Panc1 (cell line): ENCODE measurements at regions of chr14 and their contacts with region 1.

Region 1: GRCh38 chr14:51780006-51780692 is 80.3 kb upstream of the GNG2 start:
- DNase-seq: peak; percentile 15
- ATAC-seq: peak; percentile 82
- H3K4me3 ChIP-seq: no peak overlapping the region
- H3K27ac ChIP-seq: no peak overlapping the region
- H3K4me1 ChIP-seq: no peaks in the 10 kb centered on the region
- H3K27me3 ChIP-seq: peaks cover 10% of the 10 kb centered on the region
- CTCF ChIP-seq: peak; percentile 80

Region 2: DNA sequence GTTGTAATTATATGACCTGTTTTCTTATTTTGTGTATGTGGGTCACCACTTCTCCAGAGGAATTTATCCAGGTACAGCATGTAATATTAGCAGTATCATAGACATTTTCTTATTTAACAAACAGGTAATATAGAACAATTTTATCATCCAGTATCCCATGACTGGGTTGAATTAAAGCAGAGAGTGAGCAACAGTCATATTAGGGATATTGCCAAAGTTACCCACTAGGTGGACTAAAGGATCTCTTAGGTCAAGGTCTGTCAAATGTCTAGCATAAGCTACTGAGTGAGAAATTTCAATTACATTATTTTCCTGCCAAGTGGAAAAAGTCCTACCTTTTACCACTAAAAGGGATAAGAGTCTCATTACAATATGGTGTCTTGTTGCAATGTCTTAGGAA is 623.1 kb before region 1 on chr14:
- CTCF ChIA-PET with region 1: no interaction called
- POLR2A ChIA-PET with region 1: no interaction called
- in situ Hi-C with region 1: no loop called
- intact Hi-C with region 1: loop called (anchors 10 kb)
- DNase-seq: peak; percentile 1
- ATAC-seq: peak; percentile 76
- H3K4me3 ChIP-seq: no peak overlapping the region
- H3K27ac ChIP-seq: no peak overlapping the region
- H3K4me1 ChIP-seq: no peaks in the 10 kb centered on the region
- H3K27me3 ChIP-seq: no peaks in the 10 kb centered on the region
- CTCF ChIP-seq: peak; percentile 37; the same call in 1 of the 2 replicates

Region 3: GRCh38 chr14:51283402-51284085 is 496.6 kb before region 1 on chr14:
- CTCF ChIA-PET with region 1: interaction called, 3 read pairs
- POLR2A ChIA-PET with region 1: no interaction called
- in situ Hi-C with region 1: no loop called
- intact Hi-C with region 1: loop called (anchors 1 kb)
- DNase-seq: peak; percentile 74
- ATAC-seq: peak; percentile 80
- H3K4me3 ChIP-seq: no peak overlapping the region
- H3K27ac ChIP-seq: peak overlapping the region; percentile 9; the same call in 1 of the 2 replicates
- H3K4me1 ChIP-seq: no peaks in the 10 kb centered on the region
- H3K27me3 ChIP-seq: no peaks in the 10 kb centered on the region
- CTCF ChIP-seq: peak; percentile 67; the same call in 1 of the 2 replicates

Region 4: DNA sequence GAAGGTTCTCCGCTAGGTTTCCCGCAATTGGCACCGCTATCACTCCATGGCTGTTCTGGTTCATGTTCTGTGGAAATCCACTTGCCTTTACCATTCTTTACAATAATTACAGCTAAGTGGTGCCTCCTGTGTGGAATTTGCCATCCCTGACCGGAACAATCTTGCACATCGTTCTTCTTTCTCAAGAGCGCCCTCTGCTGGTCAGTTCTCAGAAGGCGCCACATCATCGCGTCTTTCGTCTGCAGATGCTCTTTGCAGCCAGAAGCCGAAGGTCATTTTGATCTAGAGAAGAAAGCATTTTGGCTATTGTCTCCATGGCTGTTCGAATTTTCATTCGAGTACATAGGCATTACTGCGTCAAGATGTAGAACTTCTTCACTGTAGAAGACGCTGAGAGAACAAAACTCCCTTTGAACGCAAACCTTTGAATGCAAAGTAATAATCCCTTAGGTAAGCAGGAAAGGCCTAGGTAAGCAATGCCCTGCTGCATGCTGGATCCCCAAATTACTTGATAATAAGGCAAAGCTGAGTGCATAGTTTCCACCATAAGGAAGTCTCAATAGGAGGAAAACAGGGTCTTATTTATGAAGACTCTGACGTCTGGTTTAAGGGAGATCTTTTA is 199.1 kb after region 1 on chr14:
- CTCF ChIA-PET with region 1: no interaction called
- POLR2A ChIA-PET with region 1: no interaction called
- in situ Hi-C with region 1: no loop called
- intact Hi-C with region 1: loop called (anchors 5 kb)
- DNase-seq: peak; percentile 60
- ATAC-seq: peak; percentile 78
- H3K4me3 ChIP-seq: no peak overlapping the region
- H3K27ac ChIP-seq: no peak overlapping the region
- H3K4me1 ChIP-seq: no peaks in the 10 kb centered on the region
- H3K27me3 ChIP-seq: no peaks in the 10 kb centered on the region
- CTCF ChIP-seq: peak; percentile 87